GM12878 (cell line): ENCODE measurements at regions of chrX and their contacts with region 1.

Region 1: DNA sequence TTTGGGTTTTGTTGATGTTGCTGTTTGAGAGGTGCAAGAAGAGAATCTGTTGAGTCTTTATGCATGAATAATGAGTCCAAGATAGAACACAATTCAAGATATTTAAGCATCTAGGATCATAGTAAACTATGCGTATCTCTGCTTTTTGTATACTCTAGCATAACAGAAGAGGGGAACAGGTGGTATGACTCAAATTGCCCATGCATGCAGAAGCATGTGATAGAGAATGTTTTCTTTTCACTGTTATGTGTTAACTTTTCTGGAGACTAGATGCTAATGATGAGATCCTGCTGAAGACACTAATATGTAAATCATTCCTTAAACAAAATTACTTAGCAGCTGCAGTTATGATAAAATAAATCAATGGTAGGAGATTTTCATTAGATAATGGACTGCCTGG is 165.3 kb upstream of the FTHL17 start:
- DNase-seq: no peak
- ATAC-seq: peak; percentile 76
- H3K4me3 ChIP-seq: no peak overlapping the region
- H3K27ac ChIP-seq: no peak overlapping the region
- H3K4me1 ChIP-seq: peaks cover 11% of the 10 kb centered on the region
- H3K27me3 ChIP-seq: no peaks in the 10 kb centered on the region; a peak in 1 of 4 replicates
- CTCF ChIP-seq: no peak
- EP300 ChIP-seq: 0 out of 4 replicates have a peak, but pooled peaks of 1 of the 2 experiments have one; percentile 26
- POLR2A ChIP-seq: no peak
- RAD21 ChIP-seq: no peak

Region 2: GRCh38 chrX:31223817-31224216 is 13.4 kb before region 1 on chrX:
- CTCF ChIA-PET with region 1: interaction called, 7 read pairs
- POLR2A ChIA-PET with region 1: interaction called, 9 read pairs
- RAD21 ChIA-PET with region 1: interaction called, 11 read pairs
- SMC1A ChIA-PET with region 1: interaction called, 99 read pairs
- in situ Hi-C with region 1: no loop called
- intact Hi-C with region 1: no loop called
- DNase-seq: no peak
- ATAC-seq: peak; percentile 86
- H3K4me3 ChIP-seq: no peak overlapping the region
- H3K27ac ChIP-seq: peak overlapping the region; percentile 18; the same call in 1 of the 2 replicates
- H3K4me1 ChIP-seq: peaks cover 10% of the 10 kb centered on the region
- H3K27me3 ChIP-seq: no peaks in the 10 kb centered on the region
- CTCF ChIP-seq: 0 out of 6 replicates have a peak, but pooled peaks of 1 of the 3 experiments have one; percentile 4
- EP300 ChIP-seq: no peak
- POLR2A ChIP-seq: no peak
- RAD21 ChIP-seq: no peak

Region 3: DNA sequence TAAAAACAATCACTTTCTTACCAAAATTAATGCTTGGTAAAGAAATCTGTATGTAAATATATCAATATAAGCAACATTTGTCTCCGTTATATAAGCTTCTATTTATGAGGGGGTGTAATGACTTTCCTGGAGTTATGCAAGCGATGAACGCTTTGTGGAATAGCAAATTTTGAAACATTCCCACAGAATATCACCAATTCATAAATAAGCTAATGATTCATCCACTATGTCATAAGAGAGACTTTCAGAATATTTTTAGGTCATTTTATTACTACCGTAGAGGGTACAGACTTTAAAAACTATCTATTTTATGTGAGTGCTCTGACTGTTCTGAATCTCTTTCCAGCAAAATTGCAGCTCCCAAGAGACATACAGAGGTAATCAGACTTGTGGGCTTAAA is 14.1 kb after region 1 on chrX:
- CTCF ChIA-PET with region 1: interaction called, 3 read pairs
- POLR2A ChIA-PET with region 1: interaction called, 5 read pairs
- RAD21 ChIA-PET with region 1: interaction called, 3 read pairs
- SMC1A ChIA-PET with region 1: interaction called, 30 read pairs
- in situ Hi-C with region 1: no loop called
- intact Hi-C with region 1: no loop called
- DNase-seq: no peak
- ATAC-seq: no peak
- H3K4me3 ChIP-seq: no peak overlapping the region
- H3K27ac ChIP-seq: no peak overlapping the region
- H3K4me1 ChIP-seq: no peaks in the 10 kb centered on the region
- H3K27me3 ChIP-seq: no peaks in the 10 kb centered on the region
- CTCF ChIP-seq: no peak
- EP300 ChIP-seq: no peak
- POLR2A ChIP-seq: no peak
- RAD21 ChIP-seq: no peak

Region 4: DNA sequence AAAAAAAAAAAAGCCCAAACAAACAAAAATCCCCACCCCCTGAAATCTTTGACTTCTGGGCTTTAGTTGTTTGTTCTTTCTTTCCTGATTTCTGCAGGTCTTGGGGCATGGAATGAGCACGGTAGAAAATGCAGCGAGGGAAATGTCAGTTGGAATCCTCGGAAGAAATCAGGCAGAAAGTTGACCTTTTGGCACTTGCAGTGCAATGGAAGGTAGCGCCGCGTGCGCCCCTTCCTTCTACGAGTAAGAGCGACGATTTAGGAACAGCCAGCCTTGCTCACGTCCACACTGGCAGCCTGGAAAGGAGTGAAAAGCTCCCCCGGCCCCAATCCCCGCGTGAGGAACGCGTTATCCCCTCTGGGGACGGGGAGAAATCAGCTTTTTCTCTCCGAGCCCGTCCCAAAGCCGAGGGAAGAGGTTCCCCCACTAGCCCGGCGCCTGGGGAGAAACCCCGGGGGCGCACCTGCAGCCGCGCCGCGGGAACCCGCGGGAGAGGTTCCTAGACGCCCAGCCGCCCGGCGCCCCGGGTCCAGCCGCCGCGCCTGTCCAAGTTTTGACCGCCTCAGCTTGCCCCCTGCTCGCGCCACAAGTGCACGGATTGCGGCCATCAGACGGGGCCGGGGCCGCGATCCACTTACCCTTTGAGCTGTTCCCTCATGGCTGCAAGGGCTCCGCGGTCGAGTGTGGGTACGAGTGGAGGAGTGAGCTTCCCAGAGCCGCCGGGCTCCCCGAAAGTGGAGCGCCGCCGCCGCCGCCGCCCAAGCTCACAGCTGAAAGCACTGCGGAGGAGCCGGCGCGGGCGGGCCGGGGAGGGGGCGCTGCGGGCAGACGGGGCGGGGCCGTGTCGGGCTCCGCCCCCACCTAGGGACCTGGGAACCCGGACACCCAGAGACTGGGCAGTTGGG is 29.2 kb after region 1 on chrX:
- CTCF ChIA-PET with region 1: no interaction called
- POLR2A ChIA-PET with region 1: interaction called, 3 read pairs
- RAD21 ChIA-PET with region 1: interaction called, 9 read pairs
- SMC1A ChIA-PET with region 1: interaction called, 3 read pairs
- in situ Hi-C with region 1: no loop called
- intact Hi-C with region 1: loop called (anchors 2 kb)
- DNase-seq: no peak
- ATAC-seq: peak; percentile 92
- H3K4me3 ChIP-seq: peak overlapping the region; percentile 70; the same call in 1 of the 2 replicates
- H3K27ac ChIP-seq: peak overlapping the region; percentile 40
- H3K4me1 ChIP-seq: no peaks in the 10 kb centered on the region
- H3K27me3 ChIP-seq: 0 out of 4 replicates have a peak, but pooled peaks cover 0 to 2% of the 10 kb centered on the region in 2 experiments
- CTCF ChIP-seq: no peak
- EP300 ChIP-seq: no peak
- POLR2A ChIP-seq: peak; percentile 57; the same call in 1 of the 2 replicates
- RAD21 ChIP-seq: no peak